ENCODE measurements at regions of chr6 and their contacts with region 1.

Region 1: DNA sequence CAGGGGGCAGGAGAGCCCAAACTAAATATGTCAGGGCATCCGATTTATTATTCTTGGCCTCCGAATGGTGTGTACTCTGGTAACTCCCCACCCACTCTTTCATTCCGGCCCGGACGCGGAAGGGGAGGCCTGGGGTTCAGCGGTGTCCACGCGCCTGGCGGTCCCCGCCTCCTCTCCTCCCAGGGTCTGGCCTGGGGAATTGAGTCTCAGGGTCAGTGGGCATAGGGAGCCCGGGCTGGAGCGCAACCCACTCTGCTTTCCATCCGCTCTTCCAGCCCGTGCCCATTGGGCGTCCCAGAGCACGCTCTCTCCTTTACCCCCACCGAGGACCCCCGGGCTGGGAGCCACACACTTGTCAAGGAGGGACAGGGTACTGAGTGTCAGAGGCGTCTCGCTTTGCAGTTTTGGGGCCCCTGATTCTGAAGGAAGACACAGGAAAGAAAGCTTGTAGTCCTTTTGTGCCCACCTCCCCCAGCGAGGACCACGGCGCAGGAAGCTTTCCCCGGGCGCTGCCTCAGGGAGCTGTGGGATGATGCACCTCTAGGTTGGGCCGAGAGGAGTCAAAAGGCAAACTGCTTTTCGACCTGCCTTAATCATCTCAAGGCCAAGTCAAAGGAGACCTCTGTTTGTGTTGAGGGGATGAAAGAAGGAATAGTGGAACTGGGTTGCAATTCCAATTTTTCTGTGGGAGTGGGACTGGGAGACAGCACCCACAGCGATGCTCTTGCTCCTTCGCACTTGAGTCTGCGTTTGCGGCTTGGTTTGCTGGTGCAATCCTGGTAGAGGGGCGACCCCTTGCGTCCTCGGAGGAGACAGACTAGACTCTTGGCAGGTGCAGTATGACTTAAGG is 2.5 kb downstream of the RSPO3 start:
- DNase-seq: peak; percentile 63
- ATAC-seq: peak; percentile 95
- H3K4me3 ChIP-seq: no peak overlapping the region
- H3K27ac ChIP-seq: no peak overlapping the region
- H3K4me1 ChIP-seq: no peaks in the 10 kb centered on the region
- H3K27me3 ChIP-seq: peaks cover 36% of the 10 kb centered on the region
- CTCF ChIP-seq: peak; percentile 60 to 91 (median 70); a peak in 5 of 6 replicates
- POLR2A ChIP-seq: no peak
- RAD21 ChIP-seq: peak; percentile 93

Region 2: GRCh38 chr6:125759184-125759902 is 1361.7 kb before region 1 on chr6:
- CTCF ChIA-PET with region 1: no interaction called
- POLR2A ChIA-PET with region 1: no interaction called
- RAD21 ChIA-PET with region 1: no interaction called
- intact Hi-C with region 1: loop called (anchors 10 kb)
- DNase-seq: peak; percentile 33
- ATAC-seq: peak; percentile 97
- H3K4me3 ChIP-seq: no peak overlapping the region
- H3K27ac ChIP-seq: no peak overlapping the region
- H3K4me1 ChIP-seq: peaks cover 0 to 6% of the 10 kb centered on the region in 2 experiments; a peak in 1 of 4 replicates
- H3K27me3 ChIP-seq: peaks cover 55% of the 10 kb centered on the region
- CTCF ChIP-seq: peak; percentile 53 to 85 (median 75); a peak in 5 of 6 replicates
- POLR2A ChIP-seq: no peak
- RAD21 ChIP-seq: peak; percentile 48

Region 3: DNA sequence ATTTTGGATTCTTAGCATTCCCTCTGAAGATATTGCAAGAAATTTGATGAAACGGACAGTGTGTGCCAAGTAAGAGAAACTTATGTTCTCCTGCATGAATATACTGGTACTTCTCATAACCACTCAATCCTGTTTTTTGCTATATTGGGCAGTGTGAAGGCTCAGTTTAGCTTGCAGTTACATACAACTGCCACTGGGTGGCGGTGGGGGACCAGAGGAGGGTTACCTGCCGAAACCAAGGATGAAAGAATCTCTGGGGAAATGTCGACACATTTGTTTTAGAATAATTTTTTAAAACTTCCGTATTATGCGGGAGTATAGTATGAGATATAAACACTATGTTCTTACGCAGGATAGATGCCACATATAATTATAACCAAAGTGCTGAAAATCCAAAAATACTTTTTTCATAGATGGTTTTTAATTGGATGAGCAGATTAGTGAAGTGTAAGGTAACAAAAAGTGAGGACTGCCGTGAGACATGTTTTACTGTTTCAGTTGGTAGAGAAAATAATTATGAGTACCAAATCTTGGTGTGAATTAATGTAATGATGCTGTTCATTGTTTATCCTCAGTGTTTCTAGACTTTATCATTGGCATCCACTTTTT is 1124.9 kb before region 1 on chr6:
- CTCF ChIA-PET with region 1: no interaction called
- POLR2A ChIA-PET with region 1: no interaction called
- RAD21 ChIA-PET with region 1: no interaction called
- intact Hi-C with region 1: loop called (anchors 2 kb)
- DNase-seq: peak; percentile 41
- ATAC-seq: peak; percentile 98
- H3K4me3 ChIP-seq: no peak overlapping the region
- H3K27ac ChIP-seq: no peak overlapping the region
- H3K4me1 ChIP-seq: peaks cover 0 to 3% of the 10 kb centered on the region in 2 experiments; a peak in 1 of 4 replicates
- H3K27me3 ChIP-seq: no peaks in the 10 kb centered on the region
- CTCF ChIP-seq: peak; percentile 67 to 97 (median 95)
- POLR2A ChIP-seq: no peak
- RAD21 ChIP-seq: peak; percentile 83

Region 4: DNA sequence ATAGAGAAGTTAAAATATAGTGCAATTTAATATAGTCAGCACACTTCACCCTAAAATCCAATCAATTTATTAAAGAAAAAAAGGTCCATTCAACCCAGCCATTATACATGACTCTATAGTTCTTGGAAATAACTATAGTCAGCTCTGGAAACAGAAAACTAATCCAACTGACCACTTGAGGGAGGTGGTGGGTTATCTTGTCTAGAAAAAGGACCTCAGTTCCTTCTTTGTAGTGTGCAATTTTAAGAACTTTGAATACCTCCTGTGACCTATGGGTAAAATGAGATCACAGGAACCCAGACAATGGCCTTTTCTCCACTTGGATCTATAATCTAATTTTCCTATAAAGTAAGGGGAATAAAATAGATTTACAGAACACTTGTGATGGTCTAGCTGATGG is 944.7 kb before region 1 on chr6:
- CTCF ChIA-PET with region 1: no interaction called
- POLR2A ChIA-PET with region 1: no interaction called
- RAD21 ChIA-PET with region 1: no interaction called
- intact Hi-C with region 1: loop called (anchors 5 kb)
- DNase-seq: no peak
- ATAC-seq: peak; percentile 54; the same call in 1 of the 2 replicates
- H3K4me3 ChIP-seq: no peak overlapping the region
- H3K27ac ChIP-seq: no peak overlapping the region
- H3K4me1 ChIP-seq: peaks cover 5 to 12% of the 10 kb centered on the region in 2 experiments; a peak in 3 of 4 replicates
- H3K27me3 ChIP-seq: no peaks in the 10 kb centered on the region
- CTCF ChIP-seq: peak; percentile 23 to 51 (median 29); a peak in 5 of 6 replicates
- POLR2A ChIP-seq: no peak
- RAD21 ChIP-seq: peak; percentile 63

Region 5: GRCh38 chr6:126361832-126362412 is 759.1 kb before region 1 on chr6:
- CTCF ChIA-PET with region 1: no interaction called
- POLR2A ChIA-PET with region 1: no interaction called
- RAD21 ChIA-PET with region 1: no interaction called
- intact Hi-C with region 1: loop called (anchors 2 kb)
- DNase-seq: no peak
- ATAC-seq: no peak
- H3K4me3 ChIP-seq: no peak overlapping the region
- H3K27ac ChIP-seq: no peak overlapping the region
- H3K4me1 ChIP-seq: no peaks in the 10 kb centered on the region
- H3K27me3 ChIP-seq: no peaks in the 10 kb centered on the region
- CTCF ChIP-seq: no peak
- POLR2A ChIP-seq: no peak
- RAD21 ChIP-seq: no peak

Region 6: DNA sequence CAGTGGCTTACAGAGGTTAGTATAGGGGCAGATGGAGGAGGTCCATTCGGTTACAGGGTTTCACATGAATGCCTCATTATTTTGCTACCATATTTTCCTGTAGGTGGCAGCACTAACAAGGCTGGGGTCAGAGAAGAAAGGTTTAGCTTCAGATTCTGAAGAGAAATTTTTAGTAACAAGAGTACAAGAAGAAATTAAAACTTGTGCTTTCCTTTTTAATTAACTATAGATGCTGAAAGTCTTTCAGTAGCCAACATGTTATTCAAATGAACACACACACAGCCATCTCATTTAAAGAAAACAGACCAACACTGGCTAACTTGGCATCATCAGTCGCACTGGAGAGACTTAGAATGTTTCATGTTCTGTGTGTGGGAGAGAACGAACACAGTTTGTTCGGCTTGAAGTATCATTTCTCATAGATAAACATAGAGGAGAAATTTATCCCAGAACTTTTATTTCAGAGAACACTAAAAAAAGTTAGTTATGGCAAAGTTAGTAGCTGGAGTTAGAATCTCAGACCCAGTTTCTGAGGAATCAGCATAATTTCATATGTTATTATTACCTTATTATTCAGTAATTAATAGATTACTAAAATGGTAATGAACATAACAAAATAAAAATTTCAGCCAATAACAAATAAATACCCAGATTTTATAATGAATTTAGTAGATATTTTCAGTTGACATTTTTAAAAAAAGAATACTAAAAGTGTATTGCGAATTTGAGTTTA is 316.5 kb before region 1 on chr6:
- CTCF ChIA-PET with region 1: no interaction called
- POLR2A ChIA-PET with region 1: no interaction called
- RAD21 ChIA-PET with region 1: no interaction called
- intact Hi-C with region 1: loop called (anchors 5 kb)
- DNase-seq: peak; percentile 19
- ATAC-seq: peak; percentile 93
- H3K4me3 ChIP-seq: no peak overlapping the region
- H3K27ac ChIP-seq: no peak overlapping the region
- H3K4me1 ChIP-seq: no peaks in the 10 kb centered on the region
- H3K27me3 ChIP-seq: peaks cover 37% of the 10 kb centered on the region
- CTCF ChIP-seq: peak; percentile 61 to 82 (median 69)
- POLR2A ChIP-seq: no peak
- RAD21 ChIP-seq: peak; percentile 71

Region 7: DNA sequence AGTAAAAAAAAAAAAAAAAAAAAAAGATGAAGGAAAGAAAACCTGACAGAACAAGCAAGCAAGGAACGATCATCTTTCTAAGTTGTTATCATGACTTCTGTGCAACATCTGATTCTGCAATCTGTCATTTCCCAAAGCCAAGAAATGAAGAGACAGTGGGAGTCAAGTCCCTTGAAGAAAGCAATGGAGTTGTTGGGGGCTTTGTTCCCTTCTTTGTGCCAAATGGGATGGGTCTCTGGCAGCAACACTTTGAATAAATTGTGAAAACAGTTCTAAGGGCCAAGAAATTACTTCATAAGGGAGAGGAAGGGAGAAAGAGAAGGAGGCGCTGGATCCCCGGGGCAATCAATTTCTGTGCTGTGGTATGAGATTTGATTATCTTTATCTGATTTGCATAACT is 35.8 kb before region 1 on chr6:
- CTCF ChIA-PET with region 1: no interaction called
- POLR2A ChIA-PET with region 1: no interaction called
- RAD21 ChIA-PET with region 1: no interaction called
- intact Hi-C with region 1: no loop called
- DNase-seq: no peak
- ATAC-seq: no peak
- H3K4me3 ChIP-seq: no peak overlapping the region
- H3K27ac ChIP-seq: no peak overlapping the region
- H3K4me1 ChIP-seq: no peaks in the 10 kb centered on the region
- H3K27me3 ChIP-seq: peaks cover 4% of the 10 kb centered on the region; the same call in 1 of the 2 replicates
- CTCF ChIP-seq: no peak
- POLR2A ChIP-seq: no peak
- RAD21 ChIP-seq: no peak